Sigmoid colon (tissue), 7 donors: ENCODE measurements at regions of chr4 and their contacts with region 1.

Region 1: GRCh38 chr4:56530269-56531148 is 24.9 kb downstream of the ARL9 start:
- DNase-seq: peak; percentile 96
- H3K4me3 ChIP-seq: peak overlapping the region; percentile 49 to 59 (median 54)
- H3K27ac ChIP-seq: peak overlapping the region in 3 of 4 donors; percentile 71 to 78 (median 74)
- H3K4me1 ChIP-seq: peaks cover 0 to 24% (median 17%) of the 10 kb centered on the region in 4 donors
- H3K27me3 ChIP-seq: no peaks in the 10 kb centered on the region
- CTCF ChIP-seq: no peak
- EP300 ChIP-seq: no peak
- POLR2A ChIP-seq: peak; percentile 32 to 35

Region 2: GRCh38 chr4:56505269-56506130 is 25.0 kb before region 1 on chr4 and contains the start of gene ARL9:
- intact Hi-C with region 1: loop called (anchors 2 kb)
- DNase-seq: peak; percentile 78
- H3K4me3 ChIP-seq: peak within 1 kb of the TSS; percentile 41 to 62 (median 58)
- H3K27ac ChIP-seq: peak within 1 kb of the TSS; percentile 62 to 73 (median 64)
- H3K4me1 ChIP-seq: peaks cover 0 to 18% (median 12%) of the 10 kb centered on the region in 4 donors
- H3K27me3 ChIP-seq: no peaks in the 10 kb centered on the region
- CTCF ChIP-seq: no peak
- EP300 ChIP-seq: no peak
- POLR2A ChIP-seq: no peak
- total RNA-seq, gene ARL9: 0.54 to 1.1 (median 0.66) TPM in 3 of 4 donors, not detected in the other